CD8-positive, alpha-beta T cell (primary cell): ENCODE measurements at regions of chr3 and their contacts with region 1.

Region 1: GRCh38 chr3:102324436-102324835 is 110.4 kb upstream of the ZPLD1 start:
- DNase-seq: no peak
- ATAC-seq: no peak
- H3K4me3 ChIP-seq: no peak overlapping the region
- H3K4me3 Mint-ChIP-seq: no peak overlapping the region
- H3K27ac ChIP-seq: no peak overlapping the region
- H3K27ac Mint-ChIP-seq: no peak overlapping the region
- H3K4me1 ChIP-seq: no peaks in the 10 kb centered on the region
- H3K4me1 Mint-ChIP-seq: no peaks in the 10 kb centered on the region
- H3K27me3 ChIP-seq: no peaks in the 10 kb centered on the region
- H3K27me3 Mint-ChIP-seq: peaks cover 3% of the 10 kb centered on the region
- CTCF ChIP-seq: no peak

Region 2: GRCh38 chr3:102307429-102307828 is 17.0 kb before region 1 on chr3:
- CTCF ChIA-PET with region 1: no interaction called
- POLR2A ChIA-PET with region 1: no interaction called
- intact Hi-C with region 1: loop called in 1 of 2 experiments (anchors 1 kb)
- DNase-seq: peak in 1 of 9 experiments; percentile 2
- ATAC-seq: no peak
- H3K4me3 ChIP-seq: no peak overlapping the region
- H3K4me3 Mint-ChIP-seq: no peak overlapping the region
- H3K27ac ChIP-seq: no peak overlapping the region
- H3K27ac Mint-ChIP-seq: no peak overlapping the region
- H3K4me1 ChIP-seq: no peaks in the 10 kb centered on the region
- H3K4me1 Mint-ChIP-seq: no peaks in the 10 kb centered on the region
- H3K27me3 ChIP-seq: no peaks in the 10 kb centered on the region
- H3K27me3 Mint-ChIP-seq: peaks cover 15% of the 10 kb centered on the region
- CTCF ChIP-seq: no peak

Region 3: DNA sequence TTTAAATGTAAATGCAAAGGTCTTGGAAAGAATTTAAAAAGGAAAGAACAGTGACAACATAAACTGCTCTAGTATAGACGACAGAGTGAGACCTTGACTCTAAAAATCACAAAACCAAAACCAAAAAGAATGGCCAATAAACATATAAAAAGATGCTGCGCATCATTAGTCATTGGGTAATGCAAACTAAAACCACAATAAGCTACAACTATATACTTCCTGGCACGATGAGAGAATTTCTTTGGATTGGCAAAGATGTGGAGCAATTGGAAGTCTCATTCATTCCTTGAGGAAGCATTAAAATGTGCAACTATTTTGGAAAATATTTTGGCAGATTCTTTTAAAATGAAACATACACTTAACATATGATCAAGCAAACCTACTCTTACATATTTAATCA is 11.7 kb after region 1 on chr3:
- CTCF ChIA-PET with region 1: no interaction called
- POLR2A ChIA-PET with region 1: no interaction called
- intact Hi-C with region 1: no loop called
- DNase-seq: no peak
- ATAC-seq: no peak
- H3K4me3 ChIP-seq: no peak overlapping the region
- H3K4me3 Mint-ChIP-seq: no peak overlapping the region
- H3K27ac ChIP-seq: no peak overlapping the region
- H3K27ac Mint-ChIP-seq: no peak overlapping the region
- H3K4me1 ChIP-seq: no peaks in the 10 kb centered on the region
- H3K4me1 Mint-ChIP-seq: no peaks in the 10 kb centered on the region
- H3K27me3 ChIP-seq: no peaks in the 10 kb centered on the region
- H3K27me3 Mint-ChIP-seq: peaks cover 10% of the 10 kb centered on the region
- CTCF ChIP-seq: no peak